Aorta (tissue), 5 donors: ENCODE measurements at regions of chr14 and their contacts with region 1.

Region 1: GRCh38 chr14:40099316-40099715 is 667.1 kb upstream of the FBXO33 start:
- DNase-seq: no peak
- ATAC-seq: no peak
- H3K4me3 ChIP-seq: no peak overlapping the region
- H3K27ac ChIP-seq: no peak overlapping the region
- H3K4me1 ChIP-seq: no peaks in the 10 kb centered on the region
- H3K27me3 ChIP-seq: no peaks in the 10 kb centered on the region

Region 2: DNA sequence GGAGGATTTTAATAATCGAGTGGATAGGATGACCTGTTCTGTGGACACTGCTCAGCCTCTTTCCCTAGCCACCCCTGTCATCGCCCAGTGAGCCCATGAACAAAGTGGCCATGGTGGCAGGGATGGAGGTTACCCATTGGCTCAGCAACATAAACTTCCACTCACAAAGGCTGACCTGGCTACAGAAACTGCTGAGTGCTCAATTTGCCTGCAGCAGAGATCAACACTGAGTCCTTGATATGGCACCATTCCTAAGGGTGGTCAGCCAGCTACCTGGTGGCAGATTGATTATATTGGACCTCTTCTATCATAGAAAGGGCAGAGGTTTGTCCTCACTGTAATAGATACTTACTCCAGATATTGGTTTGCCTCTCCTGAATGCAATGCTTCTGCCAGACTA is 201.7 kb before region 1 on chr14:
- intact Hi-C with region 1: no loop called
- DNase-seq: no peak
- ATAC-seq: no peak
- H3K4me3 ChIP-seq: no peak overlapping the region
- H3K27ac ChIP-seq: no peak overlapping the region
- H3K4me1 ChIP-seq: no peaks in the 10 kb centered on the region
- H3K27me3 ChIP-seq: no peaks in the 10 kb centered on the region

Region 3: DNA sequence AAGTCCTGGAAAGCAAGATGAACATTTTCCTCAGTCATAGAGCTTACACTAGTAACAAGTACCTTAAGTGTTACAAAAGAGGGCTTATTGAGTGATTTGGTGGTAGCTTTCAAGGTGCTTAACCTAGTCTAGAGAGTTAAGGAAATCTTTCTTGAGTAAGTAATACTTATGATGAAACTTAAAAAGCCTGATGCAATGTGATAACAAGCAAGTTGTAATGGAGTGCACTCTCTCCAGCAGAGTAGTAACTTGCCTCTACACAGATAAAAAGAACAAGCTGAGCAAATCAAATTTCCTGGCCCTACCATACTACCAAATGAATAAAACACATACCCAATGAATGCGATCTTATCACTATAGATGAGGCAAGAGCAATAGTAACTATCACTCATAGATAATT is 27.1 kb before region 1 on chr14:
- intact Hi-C with region 1: no loop called
- DNase-seq: no peak
- ATAC-seq: no peak
- H3K4me3 ChIP-seq: no peak overlapping the region
- H3K27ac ChIP-seq: no peak overlapping the region
- H3K4me1 ChIP-seq: no peaks in the 10 kb centered on the region
- H3K27me3 ChIP-seq: no peaks in the 10 kb centered on the region

Region 4: DNA sequence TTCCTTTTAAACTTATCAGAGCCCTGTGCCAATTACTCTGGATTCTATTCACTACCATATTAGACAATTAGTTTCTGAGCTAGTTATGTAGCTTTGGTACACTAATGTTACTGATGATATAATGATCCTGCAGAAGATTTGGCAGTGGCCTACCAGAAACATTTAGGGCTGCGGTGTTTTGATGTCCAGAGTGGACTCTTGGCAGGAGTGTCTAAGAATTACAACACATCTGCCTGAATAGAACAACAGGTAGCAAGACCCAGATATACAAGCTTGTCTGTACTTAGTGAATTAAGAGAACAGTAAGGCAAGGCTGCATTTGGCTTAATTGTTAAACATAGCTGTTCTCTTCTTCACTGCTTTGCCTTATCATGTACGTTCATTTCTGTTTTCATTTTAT is 24.5 kb after region 1 on chr14:
- intact Hi-C with region 1: no loop called
- DNase-seq: no peak
- ATAC-seq: no peak
- H3K4me3 ChIP-seq: no peak overlapping the region
- H3K27ac ChIP-seq: no peak overlapping the region
- H3K4me1 ChIP-seq: no peaks in the 10 kb centered on the region
- H3K27me3 ChIP-seq: no peaks in the 10 kb centered on the region

Region 5: DNA sequence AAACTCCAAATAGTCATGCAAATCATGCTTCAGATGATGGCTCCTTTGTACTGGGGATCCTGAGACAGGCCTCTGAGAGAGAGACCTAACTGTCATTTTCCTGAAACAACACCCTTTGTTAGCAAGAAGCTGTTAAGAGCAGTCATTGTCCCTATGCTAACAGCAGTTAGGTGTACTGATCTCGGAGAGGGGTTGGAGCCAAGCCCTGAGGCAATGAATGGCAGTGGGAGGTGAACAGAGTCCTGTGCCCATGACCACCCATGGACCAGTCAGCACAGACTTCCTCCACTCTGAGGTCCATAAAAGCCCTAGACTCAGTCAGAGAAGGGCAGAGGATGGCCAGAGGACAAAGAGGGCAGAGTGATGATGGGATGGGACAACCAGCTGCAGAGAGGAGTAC is 759.7 kb after region 1 on chr14:
- intact Hi-C with region 1: loop called in 1 of 2 experiments (anchors 5 kb)
- DNase-seq: no peak
- ATAC-seq: no peak
- H3K4me3 ChIP-seq: no peak overlapping the region
- H3K27ac ChIP-seq: no peak overlapping the region
- H3K4me1 ChIP-seq: no peaks in the 10 kb centered on the region
- H3K27me3 ChIP-seq: no peaks in the 10 kb centered on the region